GM23248 (cell line): ENCODE measurements at regions of chr17 and their contacts with region 1.

Region 1: DNA sequence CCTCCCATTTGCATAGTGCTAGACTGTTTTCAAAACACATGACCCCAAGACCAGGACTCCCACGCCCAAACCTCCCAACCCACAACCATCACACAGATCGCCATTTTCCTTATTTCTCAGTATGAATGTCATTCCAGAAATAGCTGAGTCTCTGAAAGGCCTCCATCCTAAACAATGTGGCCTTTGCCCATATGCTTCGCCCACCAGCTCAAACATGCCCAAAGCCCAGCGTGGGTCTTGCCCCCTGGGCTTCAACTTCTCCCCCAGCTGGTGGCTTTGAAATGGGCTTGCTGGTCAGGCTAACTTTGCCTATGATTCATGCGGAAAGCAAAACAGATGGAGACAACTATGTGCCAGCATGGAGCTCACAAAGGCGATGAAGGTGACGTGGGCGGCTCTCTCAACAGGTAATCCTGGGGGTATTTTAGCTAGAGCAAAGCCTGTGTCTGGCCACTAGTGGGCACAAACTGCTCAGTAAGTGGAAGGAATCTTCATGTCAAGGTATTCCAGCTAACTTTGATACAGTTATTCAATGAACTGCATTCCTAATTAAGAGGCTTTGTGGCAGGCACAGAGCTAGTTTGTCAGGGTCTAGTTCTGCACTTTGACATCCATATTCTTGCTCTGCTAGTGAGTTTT is 17.1 kb downstream of the PMP22 start:
- DNase-seq: peak; percentile 32
- H3K4me3 ChIP-seq: no peak overlapping the region
- H3K27ac ChIP-seq: no peak overlapping the region
- H3K4me1 ChIP-seq: 0 out of 2 replicates have a peak, but pooled peaks cover 6% of the 10 kb centered on the region
- H3K27me3 ChIP-seq: no peaks in the 10 kb centered on the region

Region 2: GRCh38 chr17:15143524-15143923 is 104.5 kb before region 1 on chr17:
- in situ Hi-C with region 1: no loop called
- DNase-seq: no peak
- H3K4me3 ChIP-seq: no peak overlapping the region
- H3K27ac ChIP-seq: no peak overlapping the region
- H3K4me1 ChIP-seq: no peaks in the 10 kb centered on the region
- H3K27me3 ChIP-seq: no peaks in the 10 kb centered on the region

Region 3: GRCh38 chr17:15307710-15308111 is 59.7 kb after region 1 on chr17:
- in situ Hi-C with region 1: loop called (anchors 10 kb)
- DNase-seq: no peak
- H3K4me3 ChIP-seq: no peak overlapping the region
- H3K27ac ChIP-seq: no peak overlapping the region
- H3K4me1 ChIP-seq: peaks cover 13% of the 10 kb centered on the region
- H3K27me3 ChIP-seq: no peaks in the 10 kb centered on the region

Region 4: DNA sequence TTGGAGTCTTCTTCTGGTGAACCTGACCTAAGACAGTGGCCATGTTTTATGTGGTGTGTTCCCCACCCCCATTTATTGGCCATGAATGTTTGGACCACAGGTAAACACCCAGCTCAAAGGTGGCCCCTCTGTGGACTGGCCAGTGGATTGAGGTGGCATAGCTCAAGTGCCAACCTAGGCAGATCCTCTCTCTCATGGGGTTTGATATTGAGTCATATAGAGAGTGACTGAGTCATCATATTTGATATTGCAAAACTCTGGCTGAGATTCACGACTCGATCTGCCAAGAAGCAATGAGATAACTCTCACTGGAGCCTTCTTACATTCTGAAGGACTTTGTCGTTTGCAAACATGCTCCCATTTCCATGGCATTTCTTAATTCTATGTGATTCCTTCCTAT is 103.9 kb after region 1 on chr17:
- in situ Hi-C with region 1: no loop called
- DNase-seq: peak; percentile 93
- H3K4me3 ChIP-seq: no peak overlapping the region
- H3K27ac ChIP-seq: peak overlapping the region; percentile 61
- H3K4me1 ChIP-seq: peaks cover 27% of the 10 kb centered on the region
- H3K27me3 ChIP-seq: no peaks in the 10 kb centered on the region

Region 5: GRCh38 chr17:15516150-15516549 is 268.1 kb after region 1 on chr17:
- in situ Hi-C with region 1: loop called (anchors 5 kb)
- DNase-seq: peak; percentile 56
- H3K4me3 ChIP-seq: no peak overlapping the region
- H3K27ac ChIP-seq: no peak overlapping the region
- H3K4me1 ChIP-seq: peaks cover 25% of the 10 kb centered on the region
- H3K27me3 ChIP-seq: no peaks in the 10 kb centered on the region